Ascending aorta (tissue), 2 donors: ENCODE measurements at regions of chr1 and their contacts with region 1.

Region 1: DNA sequence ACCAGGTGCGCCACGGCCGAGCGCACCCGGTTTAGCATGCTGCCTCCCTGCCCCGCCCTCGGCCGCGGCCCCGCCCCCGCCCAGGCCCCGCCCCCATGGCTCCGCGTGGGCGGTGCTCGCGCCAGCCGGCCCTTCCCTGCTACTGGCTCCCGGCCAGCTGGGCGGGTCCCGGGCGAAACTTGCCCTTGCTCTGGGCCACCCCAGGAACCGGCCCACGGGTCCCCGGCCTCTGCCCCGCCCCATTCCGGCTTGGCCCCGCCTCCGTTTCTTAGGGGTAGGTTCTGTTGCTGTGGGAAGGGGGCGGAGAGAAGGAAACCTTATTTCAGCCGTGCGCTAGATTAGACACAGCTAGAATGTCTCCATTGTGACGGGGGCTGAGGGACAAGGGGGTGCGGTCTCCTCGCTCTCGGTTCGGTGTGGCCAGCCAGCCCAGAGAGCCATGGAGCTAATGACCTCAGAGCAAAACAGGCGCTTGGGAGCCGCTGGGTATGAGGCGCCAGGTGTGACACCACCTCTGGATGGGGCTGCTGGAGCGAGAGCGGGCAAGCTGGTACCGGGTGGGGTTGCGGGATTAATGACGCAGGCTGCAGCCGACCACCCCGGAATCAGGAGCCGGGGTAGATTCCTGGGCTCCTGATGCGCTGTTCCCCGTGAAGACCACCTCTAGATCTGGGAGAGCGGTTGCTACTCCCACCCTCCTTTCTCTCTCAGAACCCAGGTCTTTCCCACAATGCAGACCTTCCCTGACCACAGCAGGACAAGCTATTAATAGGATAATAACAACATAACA is at the start of gene PPM1J:
- DNase-seq: peak; percentile 96 to 99
- H3K4me3 ChIP-seq: peak within 1 kb of the TSS; percentile 80 to 85
- H3K27ac ChIP-seq: peak within 1 kb of the TSS; percentile 62 to 65
- H3K4me1 ChIP-seq: peaks cover 6 to 13% of the 10 kb centered on the region in 2 donors
- H3K27me3 ChIP-seq: no peaks in the 10 kb centered on the region
- CTCF ChIP-seq: no peak
- total RNA-seq, gene PPM1J: 10.0 TPM

Region 2: DNA sequence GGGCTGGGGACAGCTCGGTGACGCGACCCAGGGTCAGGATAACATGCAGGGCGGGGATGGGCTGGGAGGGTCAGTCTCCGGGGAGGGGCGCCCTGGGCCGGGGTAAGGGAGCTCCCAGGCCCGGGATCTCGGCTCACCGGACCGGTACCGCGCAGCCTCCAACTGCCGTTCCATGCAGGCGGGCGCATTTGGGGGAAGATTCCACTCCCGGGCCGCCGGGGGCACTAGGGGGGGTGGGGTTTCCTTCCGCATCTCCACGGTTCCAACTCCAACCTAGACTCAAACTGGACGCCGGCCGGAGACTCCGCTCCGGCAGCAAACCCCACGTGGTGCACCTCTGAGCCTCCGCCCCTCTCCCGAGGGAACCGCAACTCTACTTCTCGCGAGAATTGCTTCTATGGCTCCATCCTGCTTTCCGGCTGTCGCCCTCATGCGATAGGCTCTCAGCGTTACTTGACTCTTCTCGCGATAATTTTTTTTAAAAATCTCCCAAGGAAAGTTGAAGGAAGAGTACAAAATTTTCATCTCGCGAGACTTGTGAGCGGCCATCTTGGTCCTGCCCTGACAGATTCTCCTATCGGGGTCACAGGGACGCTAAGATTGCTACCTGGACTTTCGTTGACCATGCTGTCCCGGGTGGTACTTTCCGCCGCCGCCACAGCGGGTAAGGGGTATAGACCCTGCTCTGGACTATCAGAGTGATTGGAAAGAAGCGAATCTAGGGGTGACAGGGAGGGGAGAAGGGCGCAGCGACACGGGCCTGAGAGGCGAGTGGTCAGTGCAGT is 1266.3 kb before region 1 on chr1 and contains the starts of genes ATP5PB and WDR77:
- intact Hi-C with region 1: loop called (anchors 2 kb)
- DNase-seq: peak; percentile 89 to 98
- H3K4me3 ChIP-seq: peak within 1 kb of the TSS; percentile 85 to 96
- H3K27ac ChIP-seq: peak within 1 kb of the TSS; percentile 80 to 84
- H3K4me1 ChIP-seq: peaks cover 13 to 29% of the 10 kb centered on the region in 2 donors
- H3K27me3 ChIP-seq: no peaks in the 10 kb centered on the region
- CTCF ChIP-seq: peak in 1 of 3 experiments; percentile 7
- total RNA-seq, gene ATP5PB: 24.7 TPM
- total RNA-seq, gene WDR77: 31.2 TPM

Region 3: DNA sequence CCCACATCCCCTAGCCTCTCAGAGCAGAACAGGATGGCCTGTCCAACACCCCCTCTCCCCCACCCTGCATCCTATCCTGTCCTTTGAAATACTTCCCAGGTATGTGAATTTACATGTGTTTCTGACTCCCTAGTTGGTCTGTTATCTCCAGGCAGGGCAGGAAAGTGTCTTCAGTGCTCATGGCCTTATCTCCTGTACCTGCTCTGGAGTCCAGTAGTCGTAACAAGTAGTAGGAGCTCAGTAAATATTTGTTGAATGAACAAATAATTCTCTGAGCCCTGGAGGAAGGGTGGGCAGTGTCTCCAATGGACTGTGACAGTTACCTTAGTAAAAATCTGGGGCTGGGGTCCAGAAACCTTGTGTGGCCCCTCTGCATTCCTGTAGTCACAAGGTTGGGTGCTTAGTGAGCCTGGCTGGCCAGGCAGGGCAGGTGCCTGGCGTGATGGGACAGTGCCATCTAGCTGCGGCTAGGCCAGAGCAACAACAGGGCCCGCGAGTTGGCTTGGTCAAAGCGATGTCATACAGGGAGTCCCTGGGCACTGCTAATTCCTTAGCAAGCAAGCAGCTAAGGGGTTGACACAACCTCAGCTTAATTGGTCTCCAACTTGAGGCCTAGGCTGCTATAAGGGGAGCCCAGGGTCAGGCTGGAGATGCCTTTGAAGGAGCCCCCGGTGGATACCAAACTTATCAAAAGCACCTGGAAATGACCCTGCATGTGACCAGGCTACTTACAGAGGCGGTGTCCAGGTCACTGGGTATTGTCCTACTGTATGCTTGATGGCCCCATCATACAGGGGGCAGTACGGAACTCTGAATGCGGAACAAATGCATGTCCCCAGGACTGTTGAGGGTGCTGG is 88.7 kb after region 1 on chr1:
- intact Hi-C with region 1: loop called (anchors 2 kb)
- DNase-seq: no peak
- H3K4me3 ChIP-seq: no peak overlapping the region
- H3K27ac ChIP-seq: no peak overlapping the region
- H3K4me1 ChIP-seq: no peaks in the 10 kb centered on the region
- H3K27me3 ChIP-seq: no peaks in the 10 kb centered on the region
- CTCF ChIP-seq: peak; percentile 21 to 53 (median 36)

Region 4: DNA sequence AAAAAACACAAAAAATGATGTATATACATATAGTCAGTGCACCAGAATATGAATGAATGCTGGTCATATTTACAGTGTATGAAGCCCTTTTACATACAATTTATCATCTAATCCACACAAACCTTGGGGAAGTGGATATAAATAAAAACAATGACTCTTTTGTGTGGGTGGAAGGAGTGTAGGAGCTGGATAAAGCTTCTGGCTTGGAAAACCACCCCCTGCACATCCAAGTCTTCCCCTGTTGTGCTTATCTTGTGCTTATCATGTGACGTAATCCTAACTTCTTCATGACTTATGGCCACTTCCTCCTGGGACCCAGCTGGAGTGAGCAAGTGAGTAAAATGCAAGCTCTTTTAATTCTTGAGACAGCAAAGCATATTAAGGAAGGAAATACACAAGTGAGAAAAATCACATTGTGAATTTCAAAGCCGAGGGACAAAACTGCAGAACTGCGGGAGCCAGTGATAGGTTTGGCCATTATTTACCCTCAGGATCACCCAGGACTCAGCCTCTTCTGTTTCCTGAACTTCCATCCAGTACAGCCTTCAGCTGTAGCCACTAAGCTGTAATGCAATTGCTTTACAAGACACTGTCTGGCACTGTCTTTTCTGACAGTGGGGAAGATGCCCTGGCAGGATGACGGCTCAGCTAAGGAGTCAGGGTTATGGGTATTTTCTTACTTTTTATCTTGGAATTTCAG is 103.7 kb after region 1 on chr1:
- intact Hi-C with region 1: no loop called
- DNase-seq: no peak
- H3K4me3 ChIP-seq: no peak overlapping the region
- H3K27ac ChIP-seq: no peak overlapping the region
- H3K4me1 ChIP-seq: no peaks in the 10 kb centered on the region
- H3K27me3 ChIP-seq: no peaks in the 10 kb centered on the region
- CTCF ChIP-seq: no peak

Region 5: DNA sequence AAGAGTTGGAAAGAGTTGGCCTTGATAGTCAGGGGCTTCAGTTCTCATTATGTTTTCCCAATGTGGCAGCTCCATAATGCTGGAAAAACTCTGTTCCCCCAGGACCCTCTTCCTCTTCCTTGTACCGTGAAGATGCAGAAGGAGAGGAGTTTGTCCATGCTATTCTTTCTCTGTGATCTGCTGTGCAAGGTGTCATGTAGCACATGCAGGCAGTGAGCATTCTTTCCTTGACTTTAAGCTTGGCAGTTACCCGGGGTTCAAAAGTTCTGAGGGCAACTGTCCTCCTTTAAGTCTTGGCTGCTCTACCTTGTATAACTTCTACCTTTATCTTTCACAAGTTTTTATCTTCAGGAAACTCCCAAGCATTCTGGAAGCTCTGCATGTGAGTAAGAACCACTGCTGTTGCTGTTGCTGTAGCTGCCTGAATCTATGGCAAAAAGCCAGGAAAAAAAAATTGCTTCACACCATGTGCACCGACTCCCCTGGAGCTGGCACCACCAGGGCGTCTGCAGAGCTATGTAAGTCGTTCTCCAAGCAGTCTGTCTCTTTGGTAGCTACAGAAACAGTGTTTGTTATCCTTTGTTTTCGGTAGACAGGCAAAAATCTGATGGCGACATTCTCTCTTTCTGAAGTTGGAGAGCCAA is 283.3 kb after region 1 on chr1:
- intact Hi-C with region 1: loop called (anchors 2 kb)
- DNase-seq: peak; percentile 31 to 90
- H3K4me3 ChIP-seq: no peak overlapping the region
- H3K27ac ChIP-seq: peak overlapping the region; percentile 79 to 87
- H3K4me1 ChIP-seq: peaks cover 7 to 41% of the 10 kb centered on the region in 2 donors
- H3K27me3 ChIP-seq: no peaks in the 10 kb centered on the region
- CTCF ChIP-seq: no peak

Region 6: DNA sequence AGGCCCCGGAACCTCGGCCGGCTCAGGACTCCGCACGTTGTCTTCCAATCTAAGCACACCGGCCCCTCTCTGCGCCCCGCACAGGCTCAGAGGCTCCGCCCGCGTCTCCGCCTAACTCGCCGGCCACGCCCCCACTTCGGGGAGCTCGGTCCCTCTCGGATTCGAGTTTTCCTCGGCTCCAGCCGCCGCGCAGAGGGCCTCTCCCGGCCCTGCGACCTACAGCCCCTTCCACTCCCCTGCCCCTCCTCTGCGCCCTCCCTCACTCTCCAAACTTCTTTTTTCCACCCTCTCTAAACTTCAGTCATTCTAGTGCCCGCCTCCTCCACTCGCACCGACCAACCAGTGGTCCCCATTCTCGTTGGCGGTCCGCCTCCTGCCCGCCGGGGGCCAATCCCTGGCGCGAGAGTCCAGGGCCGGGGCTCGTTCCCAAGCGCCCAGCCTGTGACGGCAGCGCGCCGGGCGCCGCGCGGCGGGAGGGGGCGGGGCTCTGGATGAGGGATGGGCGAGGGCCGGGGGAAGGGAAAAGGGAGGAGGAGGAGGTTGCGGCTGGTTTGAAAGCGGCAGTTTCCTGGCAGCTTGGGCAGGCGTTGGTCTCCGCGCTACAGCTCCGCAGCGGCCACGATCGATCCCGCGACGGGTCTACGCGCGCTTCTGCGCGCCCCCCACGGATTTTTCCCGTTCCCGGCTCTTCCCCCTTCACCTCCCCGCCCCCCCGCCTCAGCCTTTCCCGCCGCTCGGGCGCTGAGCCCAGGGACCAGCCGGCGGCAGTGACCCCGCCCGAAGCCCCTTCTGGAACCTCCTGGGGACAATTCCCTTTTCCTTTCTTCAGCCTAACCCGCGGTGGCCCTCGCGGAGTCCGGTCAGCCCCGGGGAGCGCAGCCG is 674.7 kb after region 1 on chr1 and contains the start of gene MAGI3:
- intact Hi-C with region 1: loop called (anchors 5 kb)
- DNase-seq: peak; percentile 87 to 98
- H3K4me3 ChIP-seq: peak within 1 kb of the TSS; percentile 96 to 99
- H3K27ac ChIP-seq: peak within 1 kb of the TSS; percentile 89 to 91
- H3K4me1 ChIP-seq: peaks cover 5 to 6% of the 10 kb centered on the region in 2 donors
- H3K27me3 ChIP-seq: no peaks in the 10 kb centered on the region
- CTCF ChIP-seq: no peak
- total RNA-seq, gene MAGI3: 14.9 TPM

Region 7: GRCh38 chr1:113904674-113905434 is 1189.4 kb after region 1 on chr1 and contains the starts of genes AP4B1 and DCLRE1B:
- intact Hi-C with region 1: loop called (anchors 2 kb)
- DNase-seq: peak; percentile 97 to 99
- H3K4me3 ChIP-seq: peak within 1 kb of the TSS; percentile 85 to 86
- H3K27ac ChIP-seq: peak within 1 kb of the TSS; percentile 86 to 92
- H3K4me1 ChIP-seq: peaks cover 0 to 17% of the 10 kb centered on the region in 2 donors
- H3K27me3 ChIP-seq: no peaks in the 10 kb centered on the region
- CTCF ChIP-seq: peak; percentile 53 to 82 (median 69)
- total RNA-seq, gene AP4B1: 3.2 TPM
- total RNA-seq, gene DCLRE1B: 1.9 TPM